ENCODE measurements at regions of chr19 and their contacts with region 1.

Region 1: DNA sequence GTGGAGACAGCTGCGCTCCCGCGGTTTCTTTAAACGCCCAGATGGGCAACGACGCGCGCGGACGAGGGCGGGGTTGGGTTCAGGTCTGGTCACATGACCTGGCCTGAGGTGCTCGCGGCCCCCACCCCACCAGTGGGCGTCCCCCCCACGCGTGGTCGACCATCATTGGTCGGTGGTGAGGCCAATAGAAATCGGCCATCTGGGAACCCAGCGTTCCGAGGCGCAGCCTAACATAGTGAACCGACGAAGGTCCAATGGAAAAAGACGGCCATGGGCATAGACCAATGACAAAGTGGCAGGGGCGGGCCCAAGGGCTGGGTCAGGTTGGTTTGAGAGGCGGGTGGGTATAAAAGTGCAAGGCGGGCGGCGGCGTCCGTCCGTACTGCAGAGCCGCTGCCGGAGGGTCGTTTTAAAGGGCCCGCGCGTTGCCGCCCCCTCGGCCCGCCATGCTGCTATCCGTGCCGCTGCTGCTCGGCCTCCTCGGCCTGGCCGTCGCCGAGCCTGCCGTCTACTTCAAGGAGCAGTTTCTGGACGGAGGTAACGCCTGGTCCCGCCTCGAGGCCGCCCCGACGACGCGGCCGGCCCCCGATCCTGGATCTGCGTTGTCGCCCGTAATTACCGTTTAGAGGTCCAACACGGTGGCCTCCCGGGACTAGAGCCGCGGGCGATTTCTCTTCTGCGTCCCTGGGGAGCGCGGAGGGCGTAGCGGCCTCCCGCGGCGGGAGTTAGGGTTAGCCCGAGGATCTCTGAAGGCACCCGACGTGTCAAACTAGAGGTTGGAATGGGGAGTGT is at the start of gene CALR:
- DNase-seq: peak; percentile 99
- H3K4me3 Mint-ChIP-seq: peak within 1 kb of the TSS; percentile 99
- H3K27ac Mint-ChIP-seq: peak within 1 kb of the TSS; percentile 84
- H3K4me1 Mint-ChIP-seq: peaks cover 47% of the 10 kb centered on the region
- H3K27me3 Mint-ChIP-seq: no peaks in the 10 kb centered on the region
- total RNA-seq, gene CALR: 984 and 991 TPM in 2 replicates

Region 2: DNA sequence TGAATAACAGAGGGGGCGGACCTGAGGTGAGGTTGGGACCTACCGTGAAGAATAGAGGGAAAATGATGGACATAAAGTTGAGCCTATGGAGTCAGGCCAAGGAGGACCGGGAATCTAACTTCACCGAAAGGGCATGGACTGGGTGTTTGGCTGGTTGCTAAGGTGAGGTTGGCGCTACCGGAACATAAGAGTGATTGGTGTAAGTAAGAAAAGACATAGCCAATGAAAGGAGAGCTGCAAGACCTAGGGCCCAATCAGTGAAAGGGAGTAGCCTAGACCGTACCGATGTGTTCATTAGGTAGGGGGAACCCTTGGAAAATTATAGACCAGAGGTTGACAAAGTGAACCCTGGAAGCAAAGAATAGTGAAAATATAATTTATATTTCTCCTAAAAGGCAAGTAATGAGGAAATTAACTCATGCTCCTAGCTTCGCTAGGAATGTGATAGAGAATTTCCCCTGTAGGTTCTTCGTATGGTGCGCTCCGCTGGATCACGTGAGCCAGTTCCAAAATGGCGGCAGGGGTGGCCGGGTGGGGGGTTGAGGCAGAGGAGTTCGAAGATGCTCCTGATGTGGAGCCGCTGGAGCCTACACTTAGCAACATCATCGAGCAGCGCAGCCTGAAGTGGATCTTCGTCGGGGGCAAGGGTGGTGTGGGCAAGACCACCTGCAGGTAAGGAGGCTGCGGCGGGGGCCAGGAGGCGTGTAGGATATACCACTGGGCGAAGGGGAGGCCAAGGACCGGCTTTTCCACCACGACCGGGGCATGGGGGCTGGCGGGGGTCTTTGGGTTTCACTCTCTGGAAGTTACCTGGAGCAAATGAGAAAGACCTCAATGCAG is 201.2 kb before region 1 on chr19 and contains the start of gene GET3:
- intact Hi-C with region 1: loop called (anchors 1 kb)
- DNase-seq: peak; percentile 78
- H3K4me3 Mint-ChIP-seq: peak within 1 kb of the TSS; percentile 98
- H3K27ac Mint-ChIP-seq: peak within 1 kb of the TSS; percentile 78
- H3K4me1 Mint-ChIP-seq: peaks cover 27% of the 10 kb centered on the region
- H3K27me3 Mint-ChIP-seq: no peaks in the 10 kb centered on the region
- total RNA-seq, gene GET3: 62.7 and 62.8 TPM in 2 replicates

Region 3: GRCh38 chr19:12890787-12891552 is 47.5 kb before region 1 on chr19 and contains the start of gene GCDH:
- intact Hi-C with region 1: loop called (anchors 2 kb)
- DNase-seq: peak; percentile 96
- H3K4me3 Mint-ChIP-seq: peak within 1 kb of the TSS; percentile 95
- H3K27ac Mint-ChIP-seq: peak within 1 kb of the TSS; percentile 81
- H3K4me1 Mint-ChIP-seq: peaks cover 9% of the 10 kb centered on the region
- H3K27me3 Mint-ChIP-seq: no peaks in the 10 kb centered on the region
- total RNA-seq, gene GCDH: 51.6 and 53.2 TPM in 2 replicates

Region 4: GRCh38 chr19:12918271-12918670 is 20.2 kb before region 1 on chr19:
- intact Hi-C with region 1: loop called (anchors 2 kb)
- DNase-seq: no peak
- H3K4me3 Mint-ChIP-seq: peak overlapping the region; percentile 47
- H3K27ac Mint-ChIP-seq: peak overlapping the region; percentile 67
- H3K4me1 Mint-ChIP-seq: peaks cover 20% of the 10 kb centered on the region
- H3K27me3 Mint-ChIP-seq: no peaks in the 10 kb centered on the region